Sciatic nerve (tissue), 2 donors: ENCODE measurements at regions of chr1 and their contacts with region 1.

Region 1: DNA sequence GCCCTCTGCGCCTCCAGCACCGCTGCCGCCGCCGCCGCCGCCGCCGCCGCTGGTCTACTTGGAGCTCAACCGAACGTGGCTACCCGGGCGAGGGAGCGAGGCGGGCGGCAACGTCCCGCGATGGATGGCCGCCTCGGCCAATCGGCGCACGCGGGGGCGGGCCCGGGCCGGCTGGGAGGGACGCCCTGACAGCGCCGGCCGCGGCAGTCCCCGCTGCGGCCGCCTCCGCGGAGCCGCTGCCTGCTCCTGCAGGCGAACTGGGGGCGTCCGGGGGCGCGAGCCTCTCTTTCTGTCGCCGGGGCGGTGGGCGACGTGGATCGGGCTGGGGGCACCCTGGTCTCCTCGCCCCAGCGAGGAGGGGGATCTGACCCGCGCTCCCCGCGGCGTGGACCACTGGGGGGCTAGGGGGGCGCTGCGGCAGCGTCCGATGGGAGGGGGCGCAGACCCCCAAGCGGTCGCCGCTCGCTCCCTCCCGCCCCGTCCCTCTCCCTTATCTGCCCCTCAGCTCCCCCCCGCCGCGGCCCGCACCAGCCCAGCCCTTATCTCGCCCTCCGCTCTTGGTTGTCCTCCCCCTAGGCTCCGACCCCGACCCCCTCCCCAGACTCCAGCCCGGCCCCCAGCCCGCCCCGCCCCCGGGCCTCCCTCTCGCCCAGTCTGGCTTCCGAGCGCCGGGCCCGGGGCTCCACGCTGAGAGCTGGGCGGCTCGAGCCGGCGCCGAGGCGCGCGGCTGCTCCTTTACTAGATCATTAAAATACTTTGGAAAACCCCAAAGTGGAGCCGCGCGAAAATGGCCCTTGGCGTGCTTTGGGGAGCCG is at the start of gene SSBP3:
- DNase-seq: peak; percentile 94
- ATAC-seq: peak; percentile 91
- total RNA-seq, gene SSBP3: 104 TPM

Region 2: GRCh38 chr1:54273092-54273794 is 133.3 kb before region 1 on chr1:
- intact Hi-C with region 1: loop called (anchors 10 kb)
- DNase-seq: peak; percentile 81
- ATAC-seq: peak; percentile 82